ENCODE measurements at regions of chrX and their contacts with region 1.

Region 1: DNA sequence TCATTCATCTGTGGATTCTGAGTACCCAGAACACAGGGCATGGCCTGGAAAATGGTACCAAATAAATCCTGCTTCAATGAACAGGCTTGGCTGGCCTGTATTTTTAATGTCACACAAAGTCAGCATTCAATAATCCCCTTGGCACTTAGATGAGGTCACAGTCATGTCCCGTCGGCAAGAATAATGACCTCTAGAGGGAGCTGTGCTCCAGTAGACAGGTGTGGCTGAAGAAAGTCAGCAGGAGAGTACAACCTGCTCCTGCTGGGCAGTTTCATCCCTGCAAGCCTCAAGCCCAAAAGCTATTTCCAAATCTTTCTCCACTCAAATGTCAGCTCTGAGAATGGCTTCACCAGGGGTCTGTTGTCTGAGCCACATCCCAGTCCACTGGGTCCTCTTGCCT is 404.0 kb upstream of the F9 start:
- DNase-seq: peak; percentile 80
- ATAC-seq: peak; percentile 64; the same call in 1 of the 2 replicates
- H3K4me3 ChIP-seq: no peak overlapping the region
- H3K27ac ChIP-seq: no peak overlapping the region
- H3K4me1 ChIP-seq: peaks cover 15% of the 10 kb centered on the region
- H3K27me3 ChIP-seq: no peaks in the 10 kb centered on the region
- CTCF ChIP-seq: peak; percentile 77

Region 2: GRCh38 chrX:139113708-139114107 is 12.8 kb before region 1 on chrX:
- CTCF ChIA-PET with region 1: no interaction called
- POLR2A ChIA-PET with region 1: no interaction called
- intact Hi-C with region 1: no loop called
- DNase-seq: peak; percentile 70
- ATAC-seq: peak; percentile 46
- H3K4me3 ChIP-seq: no peak overlapping the region
- H3K27ac ChIP-seq: peak overlapping the region; percentile 84
- H3K4me1 ChIP-seq: peaks cover 25% of the 10 kb centered on the region
- H3K27me3 ChIP-seq: no peaks in the 10 kb centered on the region
- CTCF ChIP-seq: no peak

Region 3: GRCh38 chrX:139429913-139430312 is 303.4 kb after region 1 on chrX:
- CTCF ChIA-PET with region 1: no interaction called
- POLR2A ChIA-PET with region 1: no interaction called
- intact Hi-C with region 1: loop called (anchors 5 kb)
- DNase-seq: peak; percentile 42
- ATAC-seq: no peak
- H3K4me3 ChIP-seq: no peak overlapping the region
- H3K27ac ChIP-seq: no peak overlapping the region
- H3K4me1 ChIP-seq: no peaks in the 10 kb centered on the region
- H3K27me3 ChIP-seq: no peaks in the 10 kb centered on the region
- CTCF ChIP-seq: peak; percentile 56